Activated T-helper 2 cell treated with anti-CD3 and anti-CD28 coated beads, Interferon-gamma antibody, Interleukin-2, Interleukin-4, amounts not matched to agents 10 μg/mL and 5 μg/mL and 100 μg/mL, durations not matched to agents 14 hours and 24 hours and 36 hours (primary cell): ENCODE measurements at regions of chr2 and their contacts with region 1.

Region 1: DNA sequence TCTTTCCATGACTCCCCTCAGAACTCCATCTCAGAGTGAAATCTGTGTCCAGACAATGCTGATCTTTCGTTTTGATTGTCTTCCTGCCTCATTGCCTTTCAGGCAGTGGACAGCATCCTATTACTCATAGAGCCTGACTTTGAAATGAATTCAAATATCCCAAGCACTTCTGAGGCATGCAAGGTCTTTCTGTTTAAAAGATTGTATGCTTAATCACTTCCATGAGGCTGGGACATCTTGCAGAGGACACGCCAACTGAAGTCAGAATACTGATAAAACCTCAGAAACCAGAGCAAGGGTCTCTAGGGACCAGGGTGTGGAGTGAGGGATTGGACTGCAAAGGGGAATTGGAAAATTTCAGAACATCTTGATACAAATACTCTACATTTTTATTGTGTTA is 836.5 kb upstream of the ID2 start:
- DNase-seq: no peak
- H3K4me3 Mint-ChIP-seq: no peak overlapping the region
- H3K27ac Mint-ChIP-seq: peak overlapping the region; percentile 81
- H3K4me1 Mint-ChIP-seq: peaks cover 64% of the 10 kb centered on the region
- H3K27me3 Mint-ChIP-seq: no peaks in the 10 kb centered on the region

Region 2: GRCh38 chr2:7467782-7468447 is 377.4 kb before region 1 on chr2:
- intact Hi-C with region 1: loop called (anchors 1 kb)
- DNase-seq: peak; percentile 57
- H3K4me3 Mint-ChIP-seq: peak overlapping the region; percentile 15
- H3K27ac Mint-ChIP-seq: peak overlapping the region; percentile 96
- H3K4me1 Mint-ChIP-seq: peaks cover 58% of the 10 kb centered on the region
- H3K27me3 Mint-ChIP-seq: no peaks in the 10 kb centered on the region

Region 3: DNA sequence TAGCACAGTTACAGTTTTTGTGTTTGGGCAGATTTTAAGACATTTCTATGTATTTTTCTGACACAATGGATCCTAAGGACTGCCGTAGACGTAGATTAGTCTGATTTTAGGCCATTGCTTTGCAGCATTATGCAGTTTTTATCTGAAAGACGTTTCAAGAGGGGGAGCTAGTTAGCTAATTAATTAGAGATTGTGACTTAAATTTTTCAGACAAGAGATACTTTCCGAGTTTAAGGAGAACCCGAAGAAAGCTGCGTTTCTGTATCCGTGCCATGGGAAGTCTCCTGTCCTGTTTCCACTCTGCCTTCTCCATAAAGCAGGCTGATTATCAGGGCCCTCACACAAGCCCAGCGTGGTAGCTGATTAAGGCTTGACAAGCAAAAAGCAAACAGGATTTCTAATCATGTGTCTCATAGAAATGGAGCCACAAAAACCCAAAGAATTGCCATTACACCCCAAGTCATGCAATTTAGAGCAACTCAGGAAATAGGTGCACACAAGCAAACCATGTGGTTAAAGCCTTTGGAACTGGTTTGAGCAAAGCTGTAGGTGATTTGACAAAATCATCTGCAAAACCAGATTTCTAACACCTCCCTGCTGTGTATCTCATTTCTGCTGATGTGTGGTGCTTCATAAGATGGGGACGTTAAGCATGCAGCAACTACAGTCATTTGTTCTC is 120.0 kb before region 1 on chr2:
- intact Hi-C with region 1: loop called (anchors 5 kb)
- DNase-seq: peak; percentile 51
- H3K4me3 Mint-ChIP-seq: peak overlapping the region; percentile 89
- H3K27ac Mint-ChIP-seq: peak overlapping the region; percentile 90
- H3K4me1 Mint-ChIP-seq: peaks cover 58% of the 10 kb centered on the region
- H3K27me3 Mint-ChIP-seq: no peaks in the 10 kb centered on the region

Region 4: GRCh38 chr2:7930800-7931635 is 85.7 kb after region 1 on chr2:
- intact Hi-C with region 1: loop called (anchors 1 kb)
- DNase-seq: no peak
- H3K4me3 Mint-ChIP-seq: peak overlapping the region; percentile 17
- H3K27ac Mint-ChIP-seq: peak overlapping the region; percentile 85
- H3K4me1 Mint-ChIP-seq: peaks cover 36% of the 10 kb centered on the region
- H3K27me3 Mint-ChIP-seq: no peaks in the 10 kb centered on the region

Region 5: GRCh38 chr2:8152392-8153257 is 307.3 kb after region 1 on chr2:
- intact Hi-C with region 1: loop called (anchors 2 kb)
- DNase-seq: no peak
- H3K4me3 Mint-ChIP-seq: no peak overlapping the region
- H3K27ac Mint-ChIP-seq: no peak overlapping the region
- H3K4me1 Mint-ChIP-seq: peaks cover 42% of the 10 kb centered on the region
- H3K27me3 Mint-ChIP-seq: no peaks in the 10 kb centered on the region